ENCODE measurements at regions of chr2 and their contacts with region 1.

Region 1: GRCh38 chr2:199850718-199851500 is at the start of gene FTCDNL1:
- DNase-seq: peak; percentile 43
- H3K4me3 Mint-ChIP-seq: peak within 1 kb of the TSS; percentile 93
- H3K27ac Mint-ChIP-seq: no peak within 1 kb of the TSS
- H3K4me1 Mint-ChIP-seq: peaks cover 6% of the 10 kb centered on the region
- H3K27me3 Mint-ChIP-seq: peaks cover 56% of the 10 kb centered on the region
- CTCF ChIP-seq: peak; percentile 57
- total RNA-seq, gene FTCDNL1: 1.9 and 2.5 TPM in 2 replicates

Region 2: DNA sequence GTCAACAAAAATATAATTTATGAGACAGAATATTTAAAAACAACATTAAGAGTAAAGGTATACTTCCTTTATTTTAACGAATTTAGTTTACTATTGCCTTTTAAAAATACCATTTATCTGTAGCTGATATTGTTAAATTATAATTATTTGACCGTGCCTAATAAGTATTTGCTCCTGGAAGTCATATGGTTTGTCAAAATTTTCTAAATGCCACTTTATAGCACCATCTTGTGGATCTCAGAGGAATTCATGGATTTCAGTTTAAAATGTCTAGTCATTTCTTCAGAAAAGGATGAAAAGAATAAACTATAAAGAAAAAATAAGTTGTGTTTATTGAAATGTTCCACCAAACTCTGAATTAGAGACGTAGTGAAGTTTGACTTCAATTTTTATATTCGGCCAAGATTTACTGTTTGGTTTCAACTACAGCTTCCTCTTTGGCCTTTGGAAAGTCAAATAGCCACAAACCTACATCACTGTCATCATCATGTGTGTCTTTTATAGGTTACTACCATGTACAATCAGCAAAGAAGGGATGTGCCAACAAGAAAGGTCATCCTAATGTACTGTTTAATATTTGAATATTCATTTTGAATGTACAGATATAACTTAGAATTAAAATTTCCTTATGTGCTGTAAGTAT is 10.3 kb after region 1 on chr2:
- CTCF ChIA-PET with region 1: interaction called, 11 read pairs
- POLR2A ChIA-PET with region 1: no interaction called
- intact Hi-C with region 1: no loop called
- DNase-seq: peak; percentile 20
- H3K4me3 Mint-ChIP-seq: no peak overlapping the region
- H3K27ac Mint-ChIP-seq: no peak overlapping the region
- H3K4me1 Mint-ChIP-seq: no peaks in the 10 kb centered on the region
- H3K27me3 Mint-ChIP-seq: peaks cover 87% of the 10 kb centered on the region
- CTCF ChIP-seq: peak; percentile 50

Region 3: DNA sequence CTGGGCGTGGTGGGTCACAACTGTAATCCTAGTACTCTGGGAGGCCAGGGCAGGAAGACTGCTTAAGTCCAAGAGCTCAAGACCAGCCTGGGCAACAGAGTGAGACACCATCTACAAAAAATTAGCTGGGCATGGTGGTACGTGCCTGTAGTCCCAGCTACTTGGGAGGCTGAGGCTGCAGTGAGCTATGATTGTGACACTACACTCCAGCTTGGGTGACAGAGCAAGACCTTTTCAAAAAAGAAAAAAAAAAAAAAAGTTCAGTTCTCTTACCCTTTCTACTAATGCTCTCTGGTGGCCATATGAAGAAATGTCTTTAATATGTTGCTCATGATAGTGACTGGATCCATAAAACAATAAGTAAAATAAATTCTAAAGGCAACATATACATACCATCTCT is 89.5 kb after region 1 on chr2:
- CTCF ChIA-PET with region 1: no interaction called
- POLR2A ChIA-PET with region 1: no interaction called
- intact Hi-C with region 1: loop called (anchors 10 kb)
- DNase-seq: peak; percentile 30
- H3K4me3 Mint-ChIP-seq: no peak overlapping the region
- H3K27ac Mint-ChIP-seq: no peak overlapping the region
- H3K4me1 Mint-ChIP-seq: no peaks in the 10 kb centered on the region
- H3K27me3 Mint-ChIP-seq: no peaks in the 10 kb centered on the region
- CTCF ChIP-seq: peak; percentile 27

Region 4: GRCh38 chr2:200021449-200022114 is 170.7 kb after region 1 on chr2:
- CTCF ChIA-PET with region 1: no interaction called
- POLR2A ChIA-PET with region 1: no interaction called
- intact Hi-C with region 1: no loop called
- DNase-seq: no peak
- H3K4me3 Mint-ChIP-seq: no peak overlapping the region
- H3K27ac Mint-ChIP-seq: no peak overlapping the region
- H3K4me1 Mint-ChIP-seq: no peaks in the 10 kb centered on the region
- H3K27me3 Mint-ChIP-seq: no peaks in the 10 kb centered on the region
- CTCF ChIP-seq: no peak

Region 5: DNA sequence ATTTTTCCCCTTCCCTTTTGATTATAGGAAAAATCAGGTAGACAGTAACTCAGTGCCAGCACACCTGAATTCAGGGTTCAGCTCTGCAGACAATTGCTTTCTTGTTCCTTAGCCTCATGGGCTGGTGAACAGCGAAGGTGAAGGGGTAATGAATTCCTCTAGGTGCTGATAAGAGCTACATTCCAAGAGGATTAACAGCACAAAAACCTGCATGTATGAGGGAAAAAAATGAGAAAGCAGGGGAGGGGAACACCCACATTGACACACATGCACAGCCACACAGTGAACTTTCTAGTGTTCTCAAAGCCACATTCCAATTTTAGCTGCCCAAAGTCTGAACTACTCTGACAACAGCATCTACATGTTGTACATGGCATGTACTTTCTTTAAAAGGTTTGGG is 501.7 kb after region 1 on chr2:
- CTCF ChIA-PET with region 1: no interaction called
- POLR2A ChIA-PET with region 1: no interaction called
- intact Hi-C with region 1: no loop called
- DNase-seq: no peak
- H3K4me3 Mint-ChIP-seq: no peak overlapping the region
- H3K27ac Mint-ChIP-seq: peak overlapping the region; percentile 75
- H3K4me1 Mint-ChIP-seq: peaks cover 23% of the 10 kb centered on the region
- H3K27me3 Mint-ChIP-seq: no peaks in the 10 kb centered on the region
- CTCF ChIP-seq: no peak